ENCODE measurements at regions of chr20 and their contacts with region 1.

Region 1: GRCh38 chr20:2873010-2873746 is at the start of gene PTPRA:
- DNase-seq: peak; percentile 85
- H3K4me3 ChIP-seq: peak within 1 kb of the TSS; percentile 86 to 98 (median 89)
- H3K4me3 Mint-ChIP-seq: peak within 1 kb of the TSS; percentile 92 to 94
- H3K27ac ChIP-seq: peak within 1 kb of the TSS; percentile 44 to 83
- H3K27ac Mint-ChIP-seq: peak within 1 kb of the TSS; percentile 70 to 92 (median 89)
- H3K4me1 ChIP-seq: peaks cover 42 to 56% of the 10 kb centered on the region in 2 donors
- H3K4me1 Mint-ChIP-seq: peaks cover 59% of the 10 kb centered on the region
- H3K27me3 ChIP-seq: peaks cover 0 to 10% of the 10 kb centered on the region in 2 donors
- H3K27me3 Mint-ChIP-seq: peaks cover 8 to 15% (median 9%) of the 10 kb centered on the region in 3 donors
- CTCF ChIP-seq: no peak
- polyA plus RNA-seq, gene PTPRA: 13.0 to 41.9 (median 13.1) TPM

Region 2: GRCh38 chr20:2283706-2284423 is 589.3 kb before region 1 on chr20:
- intact Hi-C with region 1: no loop called
- DNase-seq: no peak
- H3K4me3 ChIP-seq: no peak overlapping the region
- H3K4me3 Mint-ChIP-seq: no peak overlapping the region
- H3K27ac ChIP-seq: no peak overlapping the region
- H3K27ac Mint-ChIP-seq: no peak overlapping the region
- H3K4me1 ChIP-seq: peaks cover 35 to 36% of the 10 kb centered on the region in 2 donors
- H3K4me1 Mint-ChIP-seq: peaks cover 35% of the 10 kb centered on the region
- H3K27me3 ChIP-seq: no peaks in the 10 kb centered on the region
- H3K27me3 Mint-ChIP-seq: peaks cover 0 to 8% (median 2%) of the 10 kb centered on the region in 3 donors
- CTCF ChIP-seq: no peak

Region 3: GRCh38 chr20:2834401-2835110 is 38.6 kb before region 1 on chr20:
- intact Hi-C with region 1: loop called in 1 of 2 experiments (anchors 5 kb)
- DNase-seq: no peak
- H3K4me3 ChIP-seq: no peak overlapping the region
- H3K4me3 Mint-ChIP-seq: no peak overlapping the region
- H3K27ac ChIP-seq: no peak overlapping the region
- H3K27ac Mint-ChIP-seq: peak overlapping the region in 2 of 7 donors; percentile 20 to 53
- H3K4me1 ChIP-seq: peaks cover 19 to 20% of the 10 kb centered on the region in 2 donors
- H3K4me1 Mint-ChIP-seq: peaks cover 24% of the 10 kb centered on the region
- H3K27me3 ChIP-seq: no peaks in the 10 kb centered on the region
- H3K27me3 Mint-ChIP-seq: peaks cover 3 to 8% (median 6%) of the 10 kb centered on the region in 3 donors
- CTCF ChIP-seq: no peak

Region 4: GRCh38 chr20:2984956-2985661 is 111.9 kb after region 1 on chr20:
- intact Hi-C with region 1: loop called (anchors 10 kb)
- DNase-seq: peak in 1 of 3 donors; percentile 7
- H3K4me3 ChIP-seq: no peak overlapping the region
- H3K4me3 Mint-ChIP-seq: no peak overlapping the region
- H3K27ac ChIP-seq: peak overlapping the region in 1 of 2 donors; percentile 89
- H3K27ac Mint-ChIP-seq: no peak overlapping the region
- H3K4me1 ChIP-seq: peaks cover 48 to 57% of the 10 kb centered on the region in 2 donors
- H3K4me1 Mint-ChIP-seq: peaks cover 9% of the 10 kb centered on the region
- H3K27me3 ChIP-seq: no peaks in the 10 kb centered on the region
- H3K27me3 Mint-ChIP-seq: no peaks in the 10 kb centered on the region
- CTCF ChIP-seq: no peak

Region 5: GRCh38 chr20:2991532-2991931 is 118.4 kb after region 1 on chr20:
- intact Hi-C with region 1: loop called (anchors 10 kb)
- DNase-seq: no peak
- H3K4me3 ChIP-seq: no peak overlapping the region
- H3K4me3 Mint-ChIP-seq: no peak overlapping the region
- H3K27ac ChIP-seq: no peak overlapping the region
- H3K27ac Mint-ChIP-seq: peak overlapping the region in 1 of 7 donors; percentile 47
- H3K4me1 ChIP-seq: peaks cover 12 to 18% of the 10 kb centered on the region in 2 donors
- H3K4me1 Mint-ChIP-seq: peaks cover 7% of the 10 kb centered on the region
- H3K27me3 ChIP-seq: no peaks in the 10 kb centered on the region
- H3K27me3 Mint-ChIP-seq: no peaks in the 10 kb centered on the region
- CTCF ChIP-seq: no peak

Measured in CD14-positive monocyte (primary cell).